Calu3 (cell line): ENCODE measurements at regions of chr5 and their contacts with region 1.

Region 1: GRCh38 chr5:115888027-115888426 is 46.3 kb downstream of the AP3S1 start:
- DNase-seq: no peak
- H3K4me3 Mint-ChIP-seq: no peak overlapping the region
- H3K27ac Mint-ChIP-seq: no peak overlapping the region
- H3K4me1 Mint-ChIP-seq: peaks cover 6% of the 10 kb centered on the region
- H3K27me3 Mint-ChIP-seq: no peaks in the 10 kb centered on the region
- CTCF ChIP-seq: peak; percentile 15

Region 2: GRCh38 chr5:116032094-116032517 is 144.1 kb after region 1 on chr5 and contains the start of gene ARL14EPL:
- CTCF ChIA-PET with region 1: interaction called, 9 read pairs
- intact Hi-C with region 1: loop called (anchors 1 kb)
- DNase-seq: peak; percentile 83
- H3K4me3 Mint-ChIP-seq: no peak within 1 kb of the TSS
- H3K27ac Mint-ChIP-seq: peak within 1 kb of the TSS; percentile 55
- H3K4me1 Mint-ChIP-seq: no peaks in the 10 kb centered on the region
- H3K27me3 Mint-ChIP-seq: no peaks in the 10 kb centered on the region
- CTCF ChIP-seq: no peak
- total RNA-seq, gene ARL14EPL: 0.66 and 1.2 TPM in 2 replicates

Region 3: GRCh38 chr5:116068028-116068632 is 180.1 kb after region 1 on chr5:
- CTCF ChIA-PET with region 1: interaction called, 10 read pairs
- intact Hi-C with region 1: loop called (anchors 1 kb)
- DNase-seq: peak; percentile 44
- H3K4me3 Mint-ChIP-seq: no peak overlapping the region
- H3K27ac Mint-ChIP-seq: no peak overlapping the region
- H3K4me1 Mint-ChIP-seq: no peaks in the 10 kb centered on the region
- H3K27me3 Mint-ChIP-seq: no peaks in the 10 kb centered on the region
- CTCF ChIP-seq: peak; percentile 67

Region 4: DNA sequence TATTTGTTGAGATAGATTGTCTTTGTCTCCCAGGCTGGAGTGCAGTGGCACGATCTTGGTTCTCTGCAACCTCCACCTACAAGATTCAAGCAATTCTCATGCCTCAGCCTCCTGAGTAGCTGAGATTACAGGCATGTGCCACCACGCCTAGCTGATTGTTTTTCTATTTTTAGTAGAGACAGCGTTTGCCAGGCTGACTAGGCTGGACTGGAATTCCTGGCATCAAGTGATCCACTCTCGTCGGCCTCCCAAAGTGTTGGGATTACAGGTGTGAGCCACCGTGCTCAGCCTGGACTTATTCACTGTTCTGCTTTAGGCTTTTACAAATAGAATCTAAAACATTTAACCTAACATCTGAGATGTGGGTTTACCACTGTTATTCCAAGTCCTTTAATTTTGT is 288.1 kb after region 1 on chr5:
- CTCF ChIA-PET with region 1: no interaction called
- intact Hi-C with region 1: no loop called
- DNase-seq: no peak
- H3K4me3 Mint-ChIP-seq: no peak overlapping the region
- H3K27ac Mint-ChIP-seq: no peak overlapping the region
- H3K4me1 Mint-ChIP-seq: peaks cover 9% of the 10 kb centered on the region
- H3K27me3 Mint-ChIP-seq: no peaks in the 10 kb centered on the region
- CTCF ChIP-seq: no peak